GM12878 (cell line): ENCODE measurements at regions of chr21 and their contacts with region 1.

Region 1: GRCh38 chr21:31395268-31395667 is 51.2 kb upstream of the TIAM1 start:
- DNase-seq: no peak
- ATAC-seq: no peak
- H3K4me3 ChIP-seq: no peak overlapping the region
- H3K27ac ChIP-seq: no peak overlapping the region
- H3K4me1 ChIP-seq: no peaks in the 10 kb centered on the region
- H3K27me3 ChIP-seq: no peaks in the 10 kb centered on the region
- CTCF ChIP-seq: no peak
- EP300 ChIP-seq: no peak
- POLR2A ChIP-seq: no peak
- RAD21 ChIP-seq: no peak

Region 2: GRCh38 chr21:31376301-31376700 is 19.0 kb before region 1 on chr21:
- CTCF ChIA-PET with region 1: no interaction called
- POLR2A ChIA-PET with region 1: interaction called, 10 read pairs
- RAD21 ChIA-PET with region 1: no interaction called
- SMC1A ChIA-PET with region 1: no interaction called
- in situ Hi-C with region 1: no loop called
- intact Hi-C with region 1: no loop called
- DNase-seq: no peak
- ATAC-seq: no peak
- H3K4me3 ChIP-seq: no peak overlapping the region
- H3K27ac ChIP-seq: no peak overlapping the region
- H3K4me1 ChIP-seq: no peaks in the 10 kb centered on the region
- H3K27me3 ChIP-seq: no peaks in the 10 kb centered on the region
- CTCF ChIP-seq: no peak
- EP300 ChIP-seq: no peak
- POLR2A ChIP-seq: no peak
- RAD21 ChIP-seq: no peak